ENCODE measurements at regions of chr16 and their contacts with region 1.

Region 1: GRCh38 chr16:87982491-87983415 is 31.5 kb downstream of the BANP start:
- DNase-seq: no peak
- H3K4me3 Mint-ChIP-seq: no peak overlapping the region
- H3K27ac Mint-ChIP-seq: peak overlapping the region; percentile 64
- H3K4me1 Mint-ChIP-seq: peaks cover 68% of the 10 kb centered on the region
- H3K27me3 Mint-ChIP-seq: no peaks in the 10 kb centered on the region

Region 2: DNA sequence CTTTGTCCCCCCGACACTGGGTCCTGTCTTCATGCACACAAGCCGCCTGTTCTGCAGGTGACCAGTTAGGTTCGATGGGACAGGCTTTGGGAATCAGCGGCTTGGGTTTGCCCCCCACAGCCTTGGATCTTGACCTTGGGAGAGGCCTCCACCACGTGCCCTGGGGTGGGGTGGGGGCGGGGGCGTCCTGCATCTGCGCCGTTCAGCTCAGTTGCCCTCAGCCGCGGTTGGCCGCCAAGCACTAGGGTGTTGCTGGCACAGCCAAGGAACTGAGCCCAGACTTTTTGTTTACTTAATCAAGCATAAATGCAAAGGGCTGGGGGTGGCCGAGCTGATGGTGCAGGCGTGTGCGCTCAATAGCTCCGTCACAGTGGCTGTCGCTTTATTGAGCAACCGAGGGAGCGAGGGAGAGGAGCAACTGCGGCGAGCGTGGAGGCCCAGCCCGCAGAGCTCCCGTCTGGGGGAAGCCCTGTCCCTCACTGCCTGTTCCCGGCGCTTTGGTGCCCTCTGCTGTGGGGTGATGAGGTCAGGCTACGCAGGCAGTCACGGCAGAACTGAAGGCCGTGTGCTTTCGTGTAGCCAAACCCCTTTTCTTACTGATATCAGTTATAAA is 346.6 kb before region 1 on chr16:
- CTCF ChIA-PET with region 1: no interaction called
- POLR2A ChIA-PET with region 1: no interaction called
- intact Hi-C with region 1: no loop called
- DNase-seq: peak; percentile 91
- H3K4me3 Mint-ChIP-seq: peak overlapping the region; percentile 68
- H3K27ac Mint-ChIP-seq: no peak overlapping the region
- H3K4me1 Mint-ChIP-seq: peaks cover 11% of the 10 kb centered on the region
- H3K27me3 Mint-ChIP-seq: peaks cover 4% of the 10 kb centered on the region

Region 3: DNA sequence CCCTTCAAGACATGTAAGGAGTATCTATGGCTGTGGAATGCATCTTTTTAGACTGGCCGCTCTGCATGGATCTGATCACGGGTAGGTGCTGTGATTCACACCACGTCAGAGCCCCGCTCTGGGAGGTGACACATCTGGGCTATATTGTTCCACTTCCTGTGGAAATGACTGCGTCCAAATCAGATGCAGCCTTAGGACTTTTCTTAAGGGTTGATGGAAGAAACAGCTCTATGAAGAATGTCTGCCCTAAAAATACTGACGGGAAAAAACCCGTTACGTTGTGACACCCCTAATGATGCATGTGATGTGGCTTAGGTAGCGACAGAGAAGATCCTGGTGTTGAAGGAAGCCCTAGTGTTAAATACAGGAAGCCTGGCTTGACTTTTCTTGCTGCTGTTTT is 19.4 kb before region 1 on chr16:
- CTCF ChIA-PET with region 1: no interaction called
- POLR2A ChIA-PET with region 1: interaction called, 3 read pairs
- intact Hi-C with region 1: loop called (anchors 1 kb)
- DNase-seq: peak; percentile 89
- H3K4me3 Mint-ChIP-seq: peak overlapping the region; percentile 40
- H3K27ac Mint-ChIP-seq: peak overlapping the region; percentile 94
- H3K4me1 Mint-ChIP-seq: peaks cover 72% of the 10 kb centered on the region
- H3K27me3 Mint-ChIP-seq: no peaks in the 10 kb centered on the region

Region 4: DNA sequence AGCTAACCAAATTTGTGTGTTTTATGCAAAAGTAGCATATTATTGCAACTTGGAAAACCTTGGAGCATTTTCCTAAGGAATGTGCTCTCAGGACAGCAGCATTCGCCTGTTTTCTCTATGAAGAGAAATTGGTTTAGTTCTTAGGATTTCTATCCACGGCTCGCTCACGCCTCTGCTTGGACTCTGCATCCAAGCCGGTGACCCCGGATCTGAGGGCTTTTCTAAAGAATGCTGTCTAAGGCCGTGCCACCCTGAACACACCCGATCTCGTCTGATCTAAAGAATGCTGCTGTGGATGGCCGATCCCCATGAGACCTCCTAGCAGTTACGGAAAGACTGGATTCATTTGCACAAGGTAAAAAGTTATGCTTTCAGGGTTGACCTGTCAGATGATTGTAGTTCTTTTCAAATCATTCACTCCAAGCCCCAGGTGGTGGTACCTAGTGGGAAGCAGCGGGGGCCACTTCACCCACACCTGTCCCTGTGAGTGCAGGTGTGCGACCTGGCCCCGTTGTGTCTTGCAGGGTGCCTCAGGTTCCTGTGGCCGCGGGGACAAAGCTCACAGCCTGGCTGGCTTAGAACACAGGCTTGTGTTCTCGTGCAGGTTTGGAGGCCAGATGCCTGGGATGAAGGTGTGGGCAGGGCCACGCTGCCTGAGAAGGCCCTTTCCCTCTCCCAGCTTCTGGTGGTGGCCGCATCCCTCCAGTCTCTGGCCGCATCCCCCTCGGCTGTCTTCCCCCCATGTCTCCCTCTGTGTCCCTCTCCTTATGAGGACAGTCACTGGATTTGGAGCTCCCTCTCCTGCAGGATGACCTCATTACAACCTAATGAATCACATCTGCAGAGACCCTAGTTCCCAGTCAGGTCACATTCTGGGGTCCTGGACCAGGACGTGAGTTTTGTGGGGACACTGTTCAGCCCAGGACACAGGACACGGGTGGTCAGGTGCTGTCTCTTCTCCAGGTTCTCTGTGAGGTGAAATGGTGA is 39.6 kb after region 1 on chr16:
- CTCF ChIA-PET with region 1: no interaction called
- POLR2A ChIA-PET with region 1: no interaction called
- intact Hi-C with region 1: no loop called
- DNase-seq: no peak
- H3K4me3 Mint-ChIP-seq: no peak overlapping the region
- H3K27ac Mint-ChIP-seq: no peak overlapping the region
- H3K4me1 Mint-ChIP-seq: peaks cover 6% of the 10 kb centered on the region
- H3K27me3 Mint-ChIP-seq: no peaks in the 10 kb centered on the region

Region 5: GRCh38 chr16:89602273-89602951 is 1619.7 kb after region 1 on chr16:
- CTCF ChIA-PET with region 1: no interaction called
- POLR2A ChIA-PET with region 1: no interaction called
- intact Hi-C with region 1: no loop called
- DNase-seq: peak; percentile 81
- H3K4me3 Mint-ChIP-seq: no peak overlapping the region
- H3K27ac Mint-ChIP-seq: no peak overlapping the region
- H3K4me1 Mint-ChIP-seq: peaks cover 12% of the 10 kb centered on the region
- H3K27me3 Mint-ChIP-seq: no peaks in the 10 kb centered on the region